Cardiac septum (tissue), 1 donor: ENCODE measurements at regions of chr9 and their contacts with region 1.

Region 1: DNA sequence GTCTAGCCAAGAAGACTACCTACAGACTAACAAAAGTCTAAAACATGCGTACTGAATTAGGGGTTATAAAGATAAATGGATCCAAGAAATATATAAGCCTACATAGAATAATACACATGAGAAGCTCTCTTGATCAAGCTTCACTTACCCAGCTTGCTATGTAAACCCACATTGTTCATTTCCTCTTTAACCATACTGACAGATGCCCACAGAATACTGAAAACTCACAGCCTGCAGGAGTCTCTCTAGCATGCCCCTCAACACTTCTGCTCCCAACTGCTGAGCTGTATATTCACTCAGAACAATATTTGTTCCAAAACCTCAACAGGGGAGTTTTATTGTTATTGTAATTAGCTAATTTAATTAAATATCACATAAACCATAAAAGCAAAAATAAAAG is 52.4 kb downstream of the RFX3 start:
- DNase-seq: no peak

Region 2: DNA sequence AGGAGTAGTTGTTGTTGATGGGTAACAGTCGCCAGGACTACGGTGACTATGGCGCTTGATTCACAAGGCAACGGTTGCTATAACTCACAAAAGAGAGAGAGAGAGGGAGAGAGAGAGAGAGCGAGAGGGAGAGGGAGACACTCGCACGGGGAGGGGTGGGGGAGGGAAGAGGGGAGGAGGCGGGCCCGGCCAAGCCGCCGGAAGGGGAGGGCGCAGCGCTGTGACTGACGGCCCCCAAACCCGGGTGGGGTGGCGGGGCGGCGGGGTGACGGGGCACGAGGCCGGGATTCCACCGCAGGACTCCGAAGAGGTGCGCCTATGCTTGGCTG is 52.4 kb after region 1 on chr9 and contains the start of gene RFX3:
- intact Hi-C with region 1: loop called (anchors 5 kb)
- DNase-seq: peak; percentile 97
- total RNA-seq, gene RFX3: 4.1 TPM